Activated CD4-positive, alpha-beta memory T cell treated with anti-CD3 and anti-CD28 coated beads, Interleukin-2, amount 10 ng/mL, durations not matched to agents 7 days and 5 days (primary cell): ENCODE measurements at regions of chr19 and their contacts with region 1.

Region 1: GRCh38 chr19:10580979-10581631 is 6.0 kb downstream of the AP1M2 start:
- DNase-seq: peak; percentile 93
- H3K4me3 Mint-ChIP-seq: no peak overlapping the region
- H3K27ac Mint-ChIP-seq: no peak overlapping the region
- H3K4me1 Mint-ChIP-seq: peaks cover 21% of the 10 kb centered on the region
- H3K27me3 Mint-ChIP-seq: peaks cover 1% of the 10 kb centered on the region

Region 2: DNA sequence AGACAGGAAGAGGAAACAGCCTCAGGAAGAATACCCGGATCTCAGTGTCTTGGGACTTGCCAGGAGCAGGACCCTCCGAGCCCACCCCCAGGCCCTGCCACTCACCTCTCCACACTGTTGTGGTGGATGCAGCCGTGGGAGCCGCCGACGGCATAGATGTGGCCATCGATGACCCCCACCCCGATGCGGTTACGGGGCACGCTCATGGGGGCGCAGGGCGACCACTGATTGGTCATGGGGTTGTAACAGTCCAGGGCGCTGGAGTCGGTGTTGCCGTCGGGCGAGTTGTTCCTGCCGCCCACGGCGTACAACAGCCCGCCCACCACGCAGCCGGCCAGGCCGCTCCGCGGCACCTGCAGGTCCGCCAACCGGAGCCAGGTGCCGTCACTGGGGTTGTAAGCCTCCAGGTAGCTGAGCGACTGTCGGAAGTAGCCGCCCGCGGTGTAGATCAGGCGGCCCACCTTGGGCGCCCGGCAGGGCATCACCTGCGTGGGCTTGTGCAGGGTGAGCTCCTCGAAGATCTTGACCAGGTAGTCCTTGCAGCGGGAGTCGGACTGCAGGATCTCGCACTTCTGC is 89.5 kb before region 1 on chr19:
- CTCF ChIA-PET with region 1: no interaction called
- POLR2A ChIA-PET with region 1: no interaction called
- DNase-seq: no peak
- H3K4me3 Mint-ChIP-seq: no peak overlapping the region
- H3K27ac Mint-ChIP-seq: no peak overlapping the region
- H3K4me1 Mint-ChIP-seq: peaks cover 10% of the 10 kb centered on the region
- H3K27me3 Mint-ChIP-seq: no peaks in the 10 kb centered on the region

Region 3: DNA sequence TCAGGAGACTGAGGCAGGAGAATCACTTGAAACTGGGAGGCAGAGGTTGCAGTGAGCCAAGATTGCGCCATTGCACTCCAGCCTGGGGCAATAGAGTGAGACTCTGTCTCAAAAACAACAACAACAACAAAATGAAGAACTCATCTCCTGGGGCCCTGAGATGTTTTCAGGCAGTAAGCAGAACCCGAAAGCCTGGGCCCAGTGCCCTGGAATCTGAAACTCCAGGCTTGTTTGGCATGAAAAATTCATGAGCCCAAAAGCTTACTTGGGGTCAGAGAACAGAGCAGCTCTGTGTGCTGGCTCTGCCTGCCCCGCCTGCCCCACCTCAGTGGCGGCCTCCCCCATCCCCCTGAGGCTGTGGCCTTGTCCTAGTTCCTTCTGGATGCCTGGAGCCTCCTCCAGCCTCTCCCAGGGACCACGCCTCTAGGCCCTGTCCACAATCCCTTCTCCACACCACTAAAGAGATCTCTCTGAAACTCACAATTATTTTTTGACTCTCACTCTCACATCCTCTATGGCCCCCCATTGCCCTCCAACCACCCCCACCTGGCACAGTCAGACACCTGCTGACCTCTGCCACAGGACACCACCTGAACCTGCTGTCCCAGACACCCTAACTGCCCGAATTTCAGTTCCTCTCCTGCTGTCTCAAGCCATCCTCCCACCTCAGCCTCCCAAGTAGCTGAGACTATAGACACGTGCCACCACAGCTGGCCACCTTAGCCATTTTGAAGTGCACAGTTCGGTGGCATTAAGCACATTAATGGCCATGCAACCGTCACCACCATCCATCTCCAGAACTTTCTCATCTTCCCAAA is 12.9 kb after region 1 on chr19:
- CTCF ChIA-PET with region 1: interaction called, 10 read pairs
- POLR2A ChIA-PET with region 1: no interaction called
- DNase-seq: no peak
- H3K4me3 Mint-ChIP-seq: no peak overlapping the region
- H3K27ac Mint-ChIP-seq: no peak overlapping the region
- H3K4me1 Mint-ChIP-seq: peaks cover 27% of the 10 kb centered on the region
- H3K27me3 Mint-ChIP-seq: peaks cover 5% of the 10 kb centered on the region

Region 4: DNA sequence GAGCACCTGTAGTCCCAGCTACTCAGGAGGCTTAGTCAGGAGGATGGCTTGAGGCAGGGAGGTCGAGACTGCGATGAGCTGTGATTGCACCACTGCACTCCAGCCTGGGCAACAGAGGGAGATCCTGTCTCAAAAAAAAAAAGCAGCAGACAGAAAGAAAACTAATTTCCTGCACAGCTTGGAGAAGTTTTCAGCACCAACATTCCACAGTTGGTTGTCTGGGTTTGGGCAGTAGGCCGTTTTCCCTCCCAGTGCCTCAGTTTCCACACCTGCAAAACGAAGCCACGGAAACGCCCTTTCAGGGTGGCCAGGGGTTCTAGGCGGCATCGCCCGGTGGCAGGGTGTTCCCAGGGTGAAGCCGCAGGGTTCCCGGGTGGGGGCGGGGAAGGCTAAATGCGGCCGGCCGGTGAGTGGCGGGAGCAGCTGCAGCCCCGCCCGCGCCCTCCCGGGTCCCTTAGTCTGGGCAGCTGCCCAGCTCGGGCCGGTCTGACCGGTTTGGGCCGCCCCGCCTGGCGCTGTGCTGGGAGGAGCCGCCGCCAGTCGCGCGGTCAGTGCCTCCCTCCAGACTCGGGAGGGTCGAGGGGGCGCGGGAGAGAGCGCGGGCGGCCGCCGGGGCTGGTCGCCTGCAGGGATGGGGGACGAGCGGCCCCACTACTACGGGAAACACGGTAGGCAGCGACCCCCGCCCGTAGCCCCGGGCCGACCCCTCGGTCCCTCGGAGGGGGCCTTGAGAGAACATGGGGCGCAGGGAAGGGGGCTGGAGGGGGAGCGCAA is 44.1 kb after region 1 on chr19 and contains the start of gene SLC44A2:
- CTCF ChIA-PET with region 1: interaction called, 17 read pairs
- POLR2A ChIA-PET with region 1: interaction called, 4 read pairs
- DNase-seq: no peak
- H3K4me3 Mint-ChIP-seq: no peak within 1 kb of the TSS
- H3K27ac Mint-ChIP-seq: peak within 1 kb of the TSS; percentile 84
- H3K4me1 Mint-ChIP-seq: peaks cover 44% of the 10 kb centered on the region
- H3K27me3 Mint-ChIP-seq: no peaks in the 10 kb centered on the region
- total RNA-seq, gene SLC44A2: 147 to 152 TPM

Region 5: GRCh38 chr19:10653715-10654492 is 72.8 kb after region 1 on chr19 and contains the start of gene ILF3:
- CTCF ChIA-PET with region 1: interaction called, 30 read pairs
- POLR2A ChIA-PET with region 1: interaction called, 5 read pairs
- DNase-seq: peak; percentile 100
- H3K4me3 Mint-ChIP-seq: peak within 1 kb of the TSS; percentile 91
- H3K27ac Mint-ChIP-seq: peak within 1 kb of the TSS; percentile 97
- H3K4me1 Mint-ChIP-seq: peaks cover 45% of the 10 kb centered on the region
- H3K27me3 Mint-ChIP-seq: peaks cover 2% of the 10 kb centered on the region
- total RNA-seq, gene ILF3: 301 to 324 TPM